Pancreas (tissue), 10 donors: ENCODE measurements at regions of chr9 and their contacts with region 1.

Region 1: DNA sequence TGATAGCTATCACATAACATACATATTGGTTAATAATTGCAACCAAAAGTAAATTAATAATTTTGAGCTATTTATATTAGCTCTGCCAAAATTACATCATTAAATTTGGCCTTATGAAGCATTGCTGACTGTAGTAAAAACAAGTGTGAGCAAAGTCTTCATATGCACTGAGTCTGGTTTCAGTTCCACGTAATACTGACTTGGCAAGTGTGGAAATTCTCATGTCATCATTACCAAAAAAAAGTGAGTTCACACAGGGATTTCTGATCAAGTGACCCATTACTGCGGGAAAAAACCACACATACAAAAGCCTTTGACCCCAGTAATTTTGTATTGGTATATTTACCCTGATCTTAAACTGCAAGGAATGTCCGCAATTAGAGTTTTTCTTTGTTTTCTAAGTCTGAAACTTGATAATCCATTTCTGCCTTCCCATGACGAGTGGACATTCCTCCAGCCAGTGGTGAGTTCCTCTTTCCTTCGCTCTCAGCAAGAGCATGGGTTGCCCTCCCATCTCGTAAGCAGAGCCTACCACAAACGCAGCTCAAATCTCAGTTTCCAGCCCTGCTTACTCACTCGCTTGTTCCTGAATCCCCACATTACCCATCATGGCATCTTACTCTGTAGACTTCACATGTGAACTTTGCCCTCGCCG is 220.2 kb upstream of the DMRT1 start:
- DNase-seq: no peak
- ATAC-seq: peak in 2 of 4 donors; percentile 75 to 81
- H3K4me3 ChIP-seq: no peak overlapping the region
- H3K27ac ChIP-seq: no peak overlapping the region
- H3K4me1 ChIP-seq: peaks cover 0 to 9% (median 7%) of the 10 kb centered on the region in 3 donors
- H3K27me3 ChIP-seq: no peaks in the 10 kb centered on the region
- CTCF ChIP-seq: no peak

Region 2: GRCh38 chr9:551986-552929 is 69.1 kb before region 1 on chr9:
- intact Hi-C with region 1: no loop called
- DNase-seq: no peak
- ATAC-seq: peak in 3 of 4 donors; percentile 46 to 63 (median 52)
- H3K4me3 ChIP-seq: no peak overlapping the region
- H3K27ac ChIP-seq: no peak overlapping the region
- H3K4me1 ChIP-seq: peaks cover 0 to 22% (median 13%) of the 10 kb centered on the region in 3 donors
- H3K27me3 ChIP-seq: no peaks in the 10 kb centered on the region
- CTCF ChIP-seq: no peak

Region 3: DNA sequence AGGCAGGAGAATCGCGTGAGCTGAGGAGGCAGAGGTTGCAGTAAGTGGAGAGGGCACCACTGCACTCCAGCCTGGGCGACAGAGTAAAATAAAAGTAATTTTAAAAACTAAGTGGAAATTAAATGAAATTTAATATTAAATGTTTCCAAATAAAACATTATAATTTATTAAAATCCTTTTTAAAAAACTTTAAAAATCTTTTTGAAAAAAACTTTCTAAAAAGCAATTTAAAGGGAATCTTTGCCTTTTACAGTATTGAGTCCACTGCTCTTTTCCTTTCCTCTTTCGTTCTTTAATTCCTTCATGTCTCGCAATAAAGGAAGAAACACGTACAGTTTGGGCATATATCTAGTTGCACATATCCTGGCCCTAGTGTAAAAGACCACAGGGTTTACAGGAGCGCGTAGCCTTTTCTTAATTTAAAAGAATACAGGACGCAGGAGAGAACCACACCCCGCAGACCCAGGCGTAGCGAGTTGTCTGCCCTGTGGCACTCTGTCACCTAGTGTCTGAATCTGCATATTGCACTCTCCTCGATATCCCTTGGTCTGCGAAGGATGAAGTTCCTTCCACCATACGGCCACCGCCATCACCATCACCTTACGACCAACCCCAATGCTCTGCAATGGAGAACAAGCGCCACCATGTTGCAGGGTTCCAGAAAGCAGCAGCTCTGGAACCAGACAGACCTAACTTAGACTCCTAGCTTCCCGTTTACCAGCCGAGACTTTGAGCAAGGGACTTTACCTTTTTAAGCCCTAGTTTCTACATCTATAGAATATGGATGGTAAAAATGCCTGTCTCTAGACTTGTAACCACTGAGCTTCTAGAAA is 142.6 kb after region 1 on chr9:
- intact Hi-C with region 1: loop called in 2 of 3 experiments (anchors 5 to 10 kb)
- DNase-seq: peak; percentile 47 to 78 (median 65)
- ATAC-seq: peak; percentile 90 to 98 (median 97)
- H3K4me3 ChIP-seq: no peak overlapping the region
- H3K27ac ChIP-seq: no peak overlapping the region
- H3K4me1 ChIP-seq: peaks cover 0 to 14% (median 8%) of the 10 kb centered on the region in 3 donors
- H3K27me3 ChIP-seq: no peaks in the 10 kb centered on the region
- CTCF ChIP-seq: peak; percentile 63 to 85 (median 80)

Region 4: DNA sequence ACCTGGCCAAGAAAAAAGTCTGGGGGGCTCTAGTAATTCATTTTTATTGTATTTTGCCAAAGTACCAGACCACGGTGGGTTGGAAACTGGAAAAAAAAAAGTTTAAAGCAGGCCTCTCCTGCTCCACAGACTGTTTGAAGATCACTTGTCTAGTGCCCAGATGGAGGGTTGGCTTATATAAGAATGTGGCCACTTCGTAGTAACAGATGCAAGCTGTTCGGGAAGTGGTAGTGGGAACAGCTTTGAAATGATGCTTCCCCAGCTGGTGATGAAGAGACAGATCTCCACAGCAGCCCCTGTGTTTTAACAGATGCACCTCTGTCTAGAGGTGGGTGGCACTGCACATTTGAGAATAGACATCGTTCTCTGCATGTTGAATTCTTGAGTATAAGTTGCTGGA is 300.8 kb after region 1 on chr9:
- intact Hi-C with region 1: no loop called
- DNase-seq: no peak
- ATAC-seq: no peak
- H3K4me3 ChIP-seq: no peak overlapping the region
- H3K27ac ChIP-seq: no peak overlapping the region
- H3K4me1 ChIP-seq: no peaks in the 10 kb centered on the region
- H3K27me3 ChIP-seq: no peaks in the 10 kb centered on the region
- CTCF ChIP-seq: no peak